Activated naive CD4-positive, alpha-beta T cell treated with anti-CD3 and anti-CD28 coated beads, Interleukin-2, amount 10 ng/mL, durations not matched to agents 7 days and 5 days (primary cell): ENCODE measurements at regions of chr19 and their contacts with region 1.

Region 1: GRCh38 chr19:46537136-46538097 is 41.8 kb upstream of the PNMA8B start:
- DNase-seq: peak; percentile 74
- H3K4me3 Mint-ChIP-seq: no peak overlapping the region
- H3K27ac Mint-ChIP-seq: no peak overlapping the region
- H3K4me1 Mint-ChIP-seq: peaks cover 2% of the 10 kb centered on the region
- H3K27me3 Mint-ChIP-seq: peaks cover 54% of the 10 kb centered on the region

Region 2: GRCh38 chr19:46520616-46521015 is 16.8 kb before region 1 on chr19:
- CTCF ChIA-PET with region 1: interaction called, 66 read pairs
- DNase-seq: no peak
- H3K4me3 Mint-ChIP-seq: no peak overlapping the region
- H3K27ac Mint-ChIP-seq: peak overlapping the region; percentile 53
- H3K4me1 Mint-ChIP-seq: peaks cover 74% of the 10 kb centered on the region
- H3K27me3 Mint-ChIP-seq: peaks cover 5% of the 10 kb centered on the region

Region 3: DNA sequence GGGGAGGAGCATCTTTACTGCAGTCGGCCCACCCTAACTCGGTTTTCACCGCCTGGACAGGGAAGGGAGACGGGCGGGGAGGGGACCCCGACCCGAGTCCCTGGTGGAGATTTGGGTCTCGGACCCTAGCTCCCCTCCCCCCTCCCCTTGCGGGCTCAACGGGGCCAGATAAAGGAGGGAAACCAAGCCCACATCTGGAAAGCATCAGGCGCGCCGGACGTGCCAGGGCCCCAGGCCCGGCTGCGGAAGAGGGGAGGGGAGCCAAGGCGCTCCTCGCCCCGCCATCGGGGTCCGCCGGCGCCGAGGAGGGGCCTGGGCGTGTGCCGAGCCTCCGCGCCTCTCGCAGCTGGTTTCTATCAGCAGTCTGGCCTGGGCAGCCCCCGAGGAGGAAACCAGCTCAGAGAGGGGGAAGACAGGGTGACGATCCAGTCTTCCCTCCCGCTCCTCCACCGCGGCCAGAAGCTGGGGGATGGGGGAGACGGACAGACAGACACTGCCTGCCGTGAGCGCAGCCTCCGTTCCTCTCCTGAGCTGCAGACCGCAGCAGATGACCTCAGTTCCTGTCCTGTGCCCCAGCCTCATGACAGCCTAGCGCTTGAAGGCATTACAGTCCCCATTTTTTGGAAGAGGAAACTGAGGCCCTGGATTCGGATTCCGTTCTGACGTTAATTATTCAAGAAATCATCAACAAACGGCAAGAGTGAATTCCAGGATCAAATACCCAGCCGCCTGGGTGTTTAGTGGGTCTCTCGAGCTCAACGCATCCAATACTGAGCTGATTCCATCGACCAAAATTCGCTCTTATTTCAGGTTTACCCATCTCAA is 102.2 kb after region 1 on chr19:
- CTCF ChIA-PET with region 1: no interaction called
- DNase-seq: peak; percentile 58
- H3K4me3 Mint-ChIP-seq: peak overlapping the region; percentile 26
- H3K27ac Mint-ChIP-seq: no peak overlapping the region
- H3K4me1 Mint-ChIP-seq: peaks cover 15% of the 10 kb centered on the region
- H3K27me3 Mint-ChIP-seq: peaks cover 23% of the 10 kb centered on the region